ENCODE measurements at regions of chr7 and their contacts with region 1.

Region 1: GRCh38 chr7:22559829-22560489 is 60.0 kb upstream of the STEAP1B start:
- DNase-seq: no peak
- H3K4me3 ChIP-seq: no peak overlapping the region
- H3K27ac ChIP-seq: no peak overlapping the region
- H3K4me1 ChIP-seq: peaks cover 4 to 50% (median 17%) of the 10 kb centered on the region in 3 donors
- H3K27me3 ChIP-seq: peaks cover 0 to 16% (median 0%) of the 10 kb centered on the region in 4 donors
- CTCF ChIP-seq: peak; percentile 77 to 93 (median 86)
- POLR2A ChIP-seq: no peak

Region 2: DNA sequence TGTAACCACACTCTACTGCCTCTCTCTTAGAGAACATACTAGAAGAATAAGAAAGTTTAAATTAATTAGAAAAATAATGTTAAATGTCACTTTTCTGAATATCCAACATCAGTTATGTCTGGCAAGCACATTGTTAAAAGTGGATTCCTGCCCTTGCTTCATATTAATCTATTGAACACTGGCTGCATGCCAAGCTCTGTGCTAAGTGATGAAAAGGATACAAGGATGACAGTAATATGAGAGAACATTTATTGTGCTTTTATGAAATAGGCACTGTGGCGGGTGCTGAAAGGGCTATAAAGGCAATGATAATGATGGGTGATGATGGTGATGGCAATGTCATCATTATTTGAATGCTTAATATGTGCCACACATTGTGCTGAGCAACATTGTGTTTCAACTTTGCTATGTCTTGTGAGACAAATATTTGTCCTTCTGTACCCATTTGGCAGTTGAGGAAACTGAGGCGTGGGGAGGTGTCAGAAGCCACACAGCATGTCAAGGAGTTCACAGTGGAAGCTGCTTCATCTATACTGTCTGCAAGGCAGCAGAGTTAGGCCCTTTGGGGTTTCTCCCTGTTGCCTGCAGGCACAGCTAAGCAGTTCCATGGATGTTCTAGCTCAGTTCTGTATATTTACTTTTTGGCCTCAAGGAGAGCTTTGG is 138.9 kb before region 1 on chr7:
- intact Hi-C with region 1: no loop called
- DNase-seq: no peak
- H3K4me3 ChIP-seq: no peak overlapping the region
- H3K27ac ChIP-seq: no peak overlapping the region
- H3K4me1 ChIP-seq: peaks cover 0 to 6% (median 0%) of the 10 kb centered on the region in 3 donors
- H3K27me3 ChIP-seq: no peaks in the 10 kb centered on the region
- CTCF ChIP-seq: no peak
- POLR2A ChIP-seq: no peak

Region 3: GRCh38 chr7:22607180-22607579 is 47.2 kb after region 1 on chr7:
- intact Hi-C with region 1: no loop called
- DNase-seq: no peak
- H3K4me3 ChIP-seq: no peak overlapping the region
- H3K27ac ChIP-seq: no peak overlapping the region
- H3K4me1 ChIP-seq: peaks cover 0 to 5% (median under 1%) of the 10 kb centered on the region in 3 donors
- H3K27me3 ChIP-seq: no peaks in the 10 kb centered on the region
- CTCF ChIP-seq: no peak
- POLR2A ChIP-seq: no peak

Region 4: DNA sequence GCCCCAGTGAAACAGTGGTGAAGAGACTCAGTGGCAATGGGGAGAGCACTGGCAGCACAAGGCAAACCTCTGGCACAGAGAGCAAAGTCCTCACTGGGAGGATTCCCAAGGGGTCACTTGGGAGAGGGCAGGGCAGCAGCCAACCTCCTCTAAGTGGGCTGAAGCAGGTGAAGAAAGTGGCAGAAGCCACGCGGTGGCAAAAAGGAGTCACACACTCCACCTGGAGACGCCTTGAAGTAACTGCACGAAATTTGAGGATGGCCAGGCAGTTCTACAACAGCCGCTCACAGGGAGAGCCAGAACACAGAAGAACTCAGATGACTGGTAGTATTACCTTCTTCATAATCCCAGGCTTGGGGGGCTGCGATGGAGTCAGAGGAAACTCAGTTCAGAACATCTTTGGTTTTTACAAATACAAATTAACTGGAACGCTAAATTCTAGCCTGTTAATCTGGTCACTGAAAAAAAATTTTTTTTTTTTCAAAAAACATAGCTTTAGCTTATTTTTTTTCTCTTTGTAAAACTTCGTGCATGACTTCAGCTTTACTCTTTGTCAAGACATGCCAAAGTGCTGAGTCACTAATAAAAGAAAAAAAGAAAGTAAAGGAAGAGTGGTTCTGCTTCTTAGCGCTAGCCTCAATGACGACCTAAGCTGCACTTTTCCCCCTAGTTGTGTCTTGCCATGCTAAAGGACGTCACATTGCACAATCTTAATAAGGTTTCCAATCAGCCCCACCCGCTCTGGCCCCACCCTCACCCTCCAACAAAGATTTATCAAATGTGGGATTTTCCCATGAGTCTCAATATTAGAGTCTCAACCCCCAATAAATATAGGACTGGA is 166.6 kb after region 1 on chr7:
- intact Hi-C with region 1: loop called (anchors 5 kb)
- DNase-seq: no peak
- H3K4me3 ChIP-seq: peak overlapping the region; percentile 0 to 62 (median 34)
- H3K27ac ChIP-seq: peak overlapping the region; percentile 44 to 89 (median 73)
- H3K4me1 ChIP-seq: peaks cover 9 to 54% (median 19%) of the 10 kb centered on the region in 3 donors
- H3K27me3 ChIP-seq: no peaks in the 10 kb centered on the region
- CTCF ChIP-seq: peak; percentile 23 to 71 (median 46)
- POLR2A ChIP-seq: no peak

Region 5: GRCh38 chr7:22782616-22783232 is 222.8 kb after region 1 on chr7:
- intact Hi-C with region 1: loop called (anchors 5 kb)
- DNase-seq: no peak
- H3K4me3 ChIP-seq: no peak overlapping the region
- H3K27ac ChIP-seq: no peak overlapping the region
- H3K4me1 ChIP-seq: peaks cover 0 to 8% (median 0%) of the 10 kb centered on the region in 3 donors
- H3K27me3 ChIP-seq: no peaks in the 10 kb centered on the region
- CTCF ChIP-seq: peak; percentile 43 to 72 (median 54)
- POLR2A ChIP-seq: no peak

Region 6: GRCh38 chr7:22885797-22886261 is 325.9 kb after region 1 on chr7:
- intact Hi-C with region 1: no loop called
- DNase-seq: no peak
- H3K4me3 ChIP-seq: no peak overlapping the region
- H3K27ac ChIP-seq: no peak overlapping the region
- H3K4me1 ChIP-seq: peaks cover 0 to 4% (median 0%) of the 10 kb centered on the region in 3 donors
- H3K27me3 ChIP-seq: no peaks in the 10 kb centered on the region
- CTCF ChIP-seq: no peak
- POLR2A ChIP-seq: no peak

Measured in esophagus squamous epithelium (tissue), 5 donors.